ENCODE measurements at regions of chr17 and their contacts with region 1.

Region 1: GRCh38 chr17:77247048-77247541 is 106.3 kb downstream of the SEC14L1 start:
- DNase-seq: peak; percentile 73 to 92 (median 87)
- ATAC-seq: peak; percentile 99
- H3K4me3 ChIP-seq: peak overlapping the region; percentile 47
- H3K4me3 Mint-ChIP-seq: no peak overlapping the region
- H3K27ac ChIP-seq: no peak overlapping the region
- H3K27ac Mint-ChIP-seq: no peak overlapping the region
- H3K4me1 ChIP-seq: peaks cover 14% of the 10 kb centered on the region
- H3K4me1 Mint-ChIP-seq: peaks cover 8% of the 10 kb centered on the region
- H3K27me3 ChIP-seq: peaks cover 8 to 9% of the 10 kb centered on the region in 2 experiments
- H3K27me3 Mint-ChIP-seq: peaks cover 25% of the 10 kb centered on the region
- CTCF ChIP-seq: peak; percentile 98

Region 2: DNA sequence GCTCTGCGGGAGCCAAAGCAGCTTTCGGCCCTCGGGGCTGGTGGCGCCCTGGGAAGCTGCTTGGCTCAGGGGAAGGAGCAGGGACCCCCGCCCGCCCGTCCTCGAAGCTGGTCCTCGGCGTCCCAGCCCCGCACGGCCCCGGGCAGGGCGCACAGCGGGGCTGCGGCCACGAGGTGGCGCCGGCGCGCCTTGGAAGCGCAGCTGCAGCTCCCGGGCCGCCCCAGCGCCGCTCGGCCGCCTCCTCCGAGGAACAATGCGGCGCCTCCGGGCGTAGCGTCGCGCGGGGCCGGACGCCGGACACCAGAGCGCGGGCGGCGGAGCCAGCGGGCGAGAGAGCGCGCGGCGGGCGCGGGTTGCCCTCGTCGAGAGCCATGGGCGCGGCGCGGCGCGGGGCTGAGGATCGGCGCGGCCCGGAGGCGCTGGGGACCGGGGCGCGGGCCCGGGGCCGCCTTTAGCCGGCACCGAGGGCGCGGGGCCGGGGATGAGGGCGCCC is 378.9 kb before region 1 on chr17 and contains the start of gene MGAT5B:
- CTCF ChIA-PET with region 1: no interaction called
- POLR2A ChIA-PET with region 1: no interaction called
- intact Hi-C with region 1: loop called in 1 of 2 experiments (anchors 2 kb)
- DNase-seq: peak; percentile 56 to 91 (median 74)
- ATAC-seq: peak; percentile 95
- H3K4me3 ChIP-seq: no peak within 1 kb of the TSS
- H3K4me3 Mint-ChIP-seq: peak within 1 kb of the TSS; percentile 88
- H3K27ac ChIP-seq: no peak within 1 kb of the TSS
- H3K27ac Mint-ChIP-seq: no peak within 1 kb of the TSS
- H3K4me1 ChIP-seq: peaks cover 13% of the 10 kb centered on the region
- H3K4me1 Mint-ChIP-seq: peaks cover 16% of the 10 kb centered on the region
- H3K27me3 ChIP-seq: peaks cover 24 to 41% of the 10 kb centered on the region in 2 experiments
- H3K27me3 Mint-ChIP-seq: peaks cover 37% of the 10 kb centered on the region
- CTCF ChIP-seq: no peak
- total RNA-seq, gene MGAT5B: 0.28 to 0.77 TPM

Region 3: DNA sequence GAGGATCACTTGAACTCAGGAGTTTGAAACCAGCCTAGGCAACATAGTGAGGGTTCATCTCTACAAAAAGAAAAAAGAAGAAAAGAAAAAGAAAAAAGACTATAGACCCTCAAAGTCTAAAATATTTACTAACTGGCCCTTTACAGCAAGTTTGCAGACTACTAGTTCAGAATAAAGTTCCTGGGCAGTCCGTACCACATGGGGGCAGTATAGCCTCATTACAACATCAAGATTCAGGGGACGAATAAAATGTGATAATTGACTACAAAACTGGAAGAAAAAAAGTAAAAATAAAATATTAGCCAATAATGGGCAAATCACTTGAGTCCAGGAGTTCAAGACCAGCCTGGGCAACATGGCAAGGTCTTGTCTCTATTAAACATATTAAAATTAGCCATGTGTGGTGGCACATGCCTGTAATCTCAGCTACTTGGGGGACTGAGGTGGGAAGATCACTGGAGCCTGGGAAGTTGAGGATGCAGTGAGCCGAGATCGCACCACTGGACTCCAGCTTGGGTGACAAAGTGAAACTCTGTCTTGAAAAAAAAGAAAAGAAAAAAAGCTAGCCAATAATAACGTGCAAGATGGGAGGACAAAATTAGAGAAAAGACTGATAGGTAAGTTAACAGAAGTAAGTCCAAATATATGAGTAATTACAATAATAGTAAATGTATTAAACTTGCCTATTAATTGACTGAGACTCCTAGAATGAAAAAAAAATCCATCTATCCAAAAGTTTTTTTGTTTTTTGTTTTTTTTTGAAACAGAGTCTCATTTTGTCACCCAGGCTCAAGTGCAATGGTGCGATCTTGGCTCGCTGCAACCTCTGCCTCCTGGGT is 235.7 kb before region 1 on chr17:
- CTCF ChIA-PET with region 1: no interaction called
- POLR2A ChIA-PET with region 1: no interaction called
- intact Hi-C with region 1: loop called in 1 of 2 experiments (anchors 1 kb)
- DNase-seq: peak; percentile 31 to 74 (median 46)
- ATAC-seq: no peak
- H3K4me3 ChIP-seq: no peak overlapping the region
- H3K4me3 Mint-ChIP-seq: no peak overlapping the region
- H3K27ac ChIP-seq: no peak overlapping the region
- H3K27ac Mint-ChIP-seq: no peak overlapping the region
- H3K4me1 ChIP-seq: no peaks in the 10 kb centered on the region
- H3K4me1 Mint-ChIP-seq: no peaks in the 10 kb centered on the region
- H3K27me3 ChIP-seq: no peaks in the 10 kb centered on the region
- H3K27me3 Mint-ChIP-seq: no peaks in the 10 kb centered on the region
- CTCF ChIP-seq: peak; percentile 67

Region 4: GRCh38 chr17:77088455-77089123 is 158.5 kb before region 1 on chr17:
- CTCF ChIA-PET with region 1: interaction called, 3 read pairs
- POLR2A ChIA-PET with region 1: interaction called, 3 read pairs
- intact Hi-C with region 1: loop called (anchors 1 kb)
- DNase-seq: peak; percentile 68 to 95 (median 80)
- ATAC-seq: peak; percentile 87
- H3K4me3 ChIP-seq: peak overlapping the region; percentile 98
- H3K4me3 Mint-ChIP-seq: peak overlapping the region; percentile 99
- H3K27ac ChIP-seq: peak overlapping the region; percentile 70 to 95
- H3K27ac Mint-ChIP-seq: peak overlapping the region; percentile 95
- H3K4me1 ChIP-seq: peaks cover 49% of the 10 kb centered on the region
- H3K4me1 Mint-ChIP-seq: peaks cover 44% of the 10 kb centered on the region
- H3K27me3 ChIP-seq: no peaks in the 10 kb centered on the region
- H3K27me3 Mint-ChIP-seq: no peaks in the 10 kb centered on the region
- CTCF ChIP-seq: peak; percentile 57

Region 5: DNA sequence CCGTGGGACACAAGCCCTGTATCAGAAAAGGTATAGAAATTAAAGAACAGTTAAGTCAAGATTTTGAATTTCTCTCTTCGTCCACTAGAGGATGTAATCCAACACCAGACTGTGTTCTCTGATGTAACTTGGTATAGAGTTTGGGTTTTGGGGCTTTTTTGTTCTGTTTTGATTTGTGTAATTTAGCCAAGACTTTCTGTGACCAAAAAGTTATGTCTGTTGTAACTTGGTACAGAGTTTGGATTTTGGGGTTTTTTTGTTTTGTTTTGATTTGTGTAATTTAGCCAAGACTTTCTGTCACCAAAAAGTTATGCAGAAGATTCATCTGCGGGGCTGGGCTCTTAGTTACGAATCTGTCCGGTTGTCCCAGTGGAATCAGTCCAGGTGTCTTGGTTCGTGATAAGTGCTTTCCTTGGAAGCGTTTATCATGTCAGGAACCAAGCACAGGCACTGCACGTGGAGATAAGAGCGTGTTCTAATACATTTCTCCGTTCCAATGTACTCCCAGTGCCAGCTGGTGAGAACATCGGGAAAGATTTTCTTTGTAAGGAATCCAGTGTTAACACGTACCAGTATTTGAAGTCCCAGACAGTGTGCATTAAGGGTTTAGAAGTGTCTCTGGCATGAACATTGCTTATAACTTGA is 150.4 kb before region 1 on chr17:
- CTCF ChIA-PET with region 1: no interaction called
- POLR2A ChIA-PET with region 1: no interaction called
- intact Hi-C with region 1: loop called in 1 of 2 experiments (anchors 1 kb)
- DNase-seq: peak in 3 of 14 experiments; percentile 36 to 59 (median 58)
- ATAC-seq: peak; percentile 40
- H3K4me3 ChIP-seq: no peak overlapping the region
- H3K4me3 Mint-ChIP-seq: no peak overlapping the region
- H3K27ac ChIP-seq: no peak overlapping the region
- H3K27ac Mint-ChIP-seq: peak overlapping the region; percentile 94
- H3K4me1 ChIP-seq: peaks cover 21% of the 10 kb centered on the region
- H3K4me1 Mint-ChIP-seq: peaks cover 41% of the 10 kb centered on the region
- H3K27me3 ChIP-seq: no peaks in the 10 kb centered on the region
- H3K27me3 Mint-ChIP-seq: no peaks in the 10 kb centered on the region
- CTCF ChIP-seq: peak; percentile 58

Measured in CD4-positive, alpha-beta T cell (primary cell).